Sciatic nerve (tissue), 2 donors: ENCODE measurements at regions of chr2 and their contacts with region 1.

Region 1: GRCh38 chr2:192314800-192315481 is 120.2 kb upstream of the TMEFF2 start:
- DNase-seq: no peak
- ATAC-seq: no peak

Region 2: GRCh38 chr2:192876698-192877097 is 561.8 kb after region 1 on chr2:
- intact Hi-C with region 1: loop called (anchors 2 kb)
- DNase-seq: no peak
- ATAC-seq: no peak